Aorta (tissue), 5 donors: ENCODE measurements at regions of chr1 and their contacts with region 1.

Region 1: DNA sequence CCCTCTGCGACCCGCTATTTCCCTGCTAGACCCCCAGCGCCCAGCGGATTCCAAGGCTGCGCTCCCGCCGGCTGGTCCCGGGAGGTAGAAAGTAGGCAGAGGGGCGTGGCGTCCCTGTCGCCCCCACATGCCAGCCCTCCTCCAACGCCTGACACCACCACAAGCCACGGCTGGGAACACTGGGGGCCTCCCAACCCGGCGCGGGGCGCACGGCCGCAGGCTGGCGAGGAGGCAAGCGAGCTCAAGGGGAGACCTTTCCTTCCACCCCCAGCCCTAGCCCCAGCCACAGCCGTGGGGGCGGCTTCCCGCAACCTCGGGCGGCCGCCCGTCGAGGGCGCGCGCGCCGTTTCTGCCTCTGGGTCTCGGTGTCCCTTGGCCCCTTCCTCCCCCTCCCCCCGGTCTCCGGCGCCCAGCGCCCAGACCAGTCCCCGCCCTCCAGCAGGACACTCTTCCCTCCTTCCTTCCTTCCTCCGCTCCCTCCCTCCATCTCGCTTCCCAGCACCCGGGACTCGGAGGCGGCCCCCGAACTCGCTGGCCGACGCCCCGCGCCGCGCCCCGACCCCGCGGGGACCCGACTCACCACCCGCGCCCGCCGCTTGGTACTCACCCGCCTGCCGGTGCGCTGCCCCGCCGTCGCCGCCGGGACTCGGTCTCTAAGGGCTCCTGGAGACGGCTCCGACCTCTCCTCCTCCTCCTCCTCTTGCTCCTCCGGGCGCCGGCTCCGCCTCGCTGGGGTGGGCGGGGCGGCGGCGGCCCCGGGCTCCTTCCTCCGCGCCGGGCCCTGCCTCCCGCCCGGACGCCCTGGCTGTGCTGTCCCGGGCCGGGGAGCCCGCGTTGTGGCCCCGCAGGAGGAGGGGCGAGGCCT is at the start of gene GNG12:
- DNase-seq: peak; percentile 87 to 91
- ATAC-seq: peak; percentile 89
- H3K4me3 ChIP-seq: peak within 1 kb of the TSS; percentile 71 to 93
- H3K27ac ChIP-seq: peak within 1 kb of the TSS; percentile 91 to 96
- H3K4me1 ChIP-seq: peaks cover 0 to 3% of the 10 kb centered on the region in 2 donors
- H3K27me3 ChIP-seq: no peaks in the 10 kb centered on the region
- total RNA-seq, gene GNG12: 123 to 175 TPM

Region 2: DNA sequence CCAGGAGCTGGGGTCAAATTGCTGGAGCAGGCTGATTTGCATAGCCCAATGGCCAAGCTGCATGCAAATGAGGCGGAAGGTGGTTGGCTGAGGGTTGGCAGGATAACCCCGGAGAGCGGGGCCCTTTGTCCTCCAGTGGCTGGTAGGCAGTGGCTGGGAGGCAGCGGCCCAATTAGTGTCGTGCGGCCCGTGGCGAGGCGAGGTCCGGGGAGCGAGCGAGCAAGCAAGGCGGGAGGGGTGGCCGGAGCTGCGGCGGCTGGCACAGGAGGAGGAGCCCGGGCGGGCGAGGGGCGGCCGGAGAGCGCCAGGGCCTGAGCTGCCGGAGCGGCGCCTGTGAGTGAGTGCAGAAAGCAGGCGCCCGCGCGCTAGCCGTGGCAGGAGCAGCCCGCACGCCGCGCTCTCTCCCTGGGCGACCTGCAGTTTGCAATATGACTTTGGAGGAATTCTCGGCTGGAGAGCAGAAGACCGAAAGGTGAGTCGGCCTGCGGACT is 147.9 kb before region 1 on chr1 and contains the start of gene GADD45A:
- intact Hi-C with region 1: loop called in 1 of 2 experiments (anchors 5 kb)
- DNase-seq: peak; percentile 99
- ATAC-seq: peak; percentile 95
- H3K4me3 ChIP-seq: peak within 1 kb of the TSS; percentile 80 to 96
- H3K27ac ChIP-seq: peak within 1 kb of the TSS; percentile 87 to 95
- H3K4me1 ChIP-seq: peaks cover 0 to 5% of the 10 kb centered on the region in 2 donors
- H3K27me3 ChIP-seq: no peaks in the 10 kb centered on the region
- total RNA-seq, gene GADD45A: 49.7 to 158 TPM

Region 3: DNA sequence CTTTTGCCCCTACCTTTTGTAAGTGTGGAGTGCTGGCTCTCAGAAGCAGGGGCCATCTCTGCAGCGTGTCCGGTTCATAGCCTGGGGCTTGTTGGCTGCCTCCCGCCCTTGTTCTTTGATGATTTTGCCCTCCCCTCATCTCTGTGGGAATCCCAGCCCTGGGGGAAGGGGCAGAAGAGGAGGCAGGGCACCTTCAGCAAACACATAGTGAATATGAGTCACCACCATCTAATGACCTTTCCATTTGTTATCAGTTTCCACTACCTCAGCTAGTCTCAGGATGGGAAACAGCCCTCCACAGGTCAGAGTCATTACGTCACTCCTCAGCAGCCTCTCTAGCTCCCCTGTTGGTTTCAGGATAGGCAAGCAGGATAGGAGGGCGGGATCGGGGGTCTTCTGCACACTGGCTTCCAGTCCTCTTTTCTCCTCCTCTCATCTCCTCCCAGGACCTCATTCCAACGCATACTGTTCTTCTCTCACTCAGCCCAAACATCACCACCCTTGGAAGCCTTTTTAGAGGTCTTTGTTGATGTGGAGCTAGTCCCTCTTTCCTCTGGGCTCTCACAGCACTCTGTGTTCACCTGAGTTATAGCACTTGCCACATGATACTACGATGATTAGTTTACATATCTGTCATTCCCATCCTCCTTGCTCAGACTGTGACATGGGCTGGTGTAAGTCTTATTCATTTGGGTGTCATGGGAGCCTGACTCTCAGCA is 132.1 kb before region 1 on chr1:
- intact Hi-C with region 1: loop called in 1 of 2 experiments (anchors 10 kb)
- DNase-seq: no peak
- ATAC-seq: peak; percentile 62
- H3K4me3 ChIP-seq: no peak overlapping the region
- H3K27ac ChIP-seq: no peak overlapping the region
- H3K4me1 ChIP-seq: no peaks in the 10 kb centered on the region
- H3K27me3 ChIP-seq: no peaks in the 10 kb centered on the region

Region 4: GRCh38 chr1:67766141-67766978 is 66.6 kb before region 1 on chr1:
- intact Hi-C with region 1: loop called (anchors 5 kb)
- DNase-seq: peak; percentile 63 to 83
- ATAC-seq: peak; percentile 76
- H3K4me3 ChIP-seq: no peak overlapping the region
- H3K27ac ChIP-seq: peak overlapping the region in 1 of 2 donors; percentile 22
- H3K4me1 ChIP-seq: peaks cover 0 to 5% of the 10 kb centered on the region in 2 donors
- H3K27me3 ChIP-seq: no peaks in the 10 kb centered on the region

Region 5: GRCh38 chr1:67780637-67781036 is 52.3 kb before region 1 on chr1:
- intact Hi-C with region 1: no loop called
- DNase-seq: no peak
- ATAC-seq: peak; percentile 62
- H3K4me3 ChIP-seq: no peak overlapping the region
- H3K27ac ChIP-seq: no peak overlapping the region
- H3K4me1 ChIP-seq: peaks cover 7 to 20% of the 10 kb centered on the region in 2 donors
- H3K27me3 ChIP-seq: no peaks in the 10 kb centered on the region

Region 6: DNA sequence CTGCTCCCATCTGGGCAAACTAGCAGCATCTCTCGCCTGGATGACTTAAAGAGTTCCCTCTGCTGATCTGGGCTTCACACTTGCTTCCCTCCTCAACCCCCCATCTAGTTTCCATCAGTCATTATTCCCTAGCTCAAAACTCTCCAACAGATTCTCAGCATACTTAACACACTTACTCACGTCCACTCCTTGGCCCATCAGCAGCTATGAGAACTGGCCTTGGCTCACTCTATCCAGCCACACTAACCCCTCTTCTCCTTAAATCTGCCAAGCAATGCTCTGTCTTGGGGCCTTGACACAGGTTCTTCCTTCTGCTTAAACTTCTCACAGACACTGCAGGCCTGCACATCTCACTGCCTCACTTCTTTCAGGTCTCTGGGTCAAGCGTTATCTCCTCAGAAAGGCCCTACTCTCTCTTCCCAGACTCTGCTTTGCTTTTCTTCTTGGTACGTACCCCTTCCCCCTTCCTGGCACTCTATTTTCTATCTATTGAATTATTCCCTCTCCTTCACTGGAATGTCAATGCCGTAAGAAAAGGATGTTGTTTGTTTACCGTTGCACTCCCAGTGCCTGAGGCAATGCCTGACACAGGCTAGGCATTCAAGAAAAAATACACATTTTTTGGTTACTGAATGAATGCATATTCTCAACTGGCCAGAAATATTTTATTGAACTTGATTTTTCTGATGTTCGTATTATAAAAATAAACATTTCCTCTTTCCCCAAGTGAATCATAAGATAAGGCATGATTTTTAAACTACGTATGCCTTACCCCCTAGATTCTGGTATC is 41.1 kb before region 1 on chr1:
- intact Hi-C with region 1: loop called (anchors 2 to 5 kb)
- DNase-seq: peak in 1 of 2 donors; percentile 69
- ATAC-seq: peak; percentile 84
- H3K4me3 ChIP-seq: no peak overlapping the region
- H3K27ac ChIP-seq: peak overlapping the region; percentile 84 to 99
- H3K4me1 ChIP-seq: peaks cover 12 to 30% of the 10 kb centered on the region in 2 donors
- H3K27me3 ChIP-seq: no peaks in the 10 kb centered on the region

Region 7: DNA sequence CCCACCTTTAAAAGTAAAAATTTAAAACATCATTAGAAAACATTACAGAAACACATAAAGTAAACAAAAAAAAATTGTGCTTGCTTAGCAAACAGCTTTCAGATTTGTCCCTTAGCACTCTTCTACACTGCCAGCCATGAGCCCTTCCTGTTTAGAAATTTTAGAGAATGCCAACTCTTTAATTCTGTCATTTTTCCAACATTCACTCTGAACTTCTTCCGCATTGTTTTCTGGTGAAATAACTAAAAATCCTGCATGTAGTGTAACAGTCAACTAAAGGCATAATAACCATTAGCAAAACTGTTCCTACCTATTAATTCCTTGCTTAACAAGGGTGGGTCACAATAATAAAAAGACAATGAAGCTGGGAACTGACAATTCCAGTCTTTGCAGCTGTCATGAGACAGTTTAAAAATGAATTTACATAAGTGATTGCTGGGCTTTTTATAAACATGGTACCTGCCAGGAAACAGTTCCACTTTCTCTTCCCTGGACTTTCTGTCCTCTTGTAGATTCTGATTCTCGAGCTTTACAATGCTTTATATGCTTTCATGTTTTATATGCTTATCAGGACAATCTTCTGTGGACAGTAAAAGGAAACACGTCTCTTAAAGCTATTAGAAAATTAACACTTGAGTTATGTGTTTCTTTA is 18.7 kb before region 1 on chr1:
- intact Hi-C with region 1: loop called in 1 of 2 experiments (anchors 1 kb)
- DNase-seq: no peak
- ATAC-seq: peak; percentile 53
- H3K4me3 ChIP-seq: no peak overlapping the region
- H3K27ac ChIP-seq: peak overlapping the region; percentile 53 to 61
- H3K4me1 ChIP-seq: peaks cover 11 to 19% of the 10 kb centered on the region in 2 donors
- H3K27me3 ChIP-seq: no peaks in the 10 kb centered on the region

Region 8: GRCh38 chr1:68221621-68222373 is 388.8 kb after region 1 on chr1:
- intact Hi-C with region 1: loop called in 1 of 2 experiments (anchors 10 kb)
- DNase-seq: no peak
- ATAC-seq: no peak
- H3K4me3 ChIP-seq: no peak overlapping the region
- H3K27ac ChIP-seq: no peak overlapping the region
- H3K4me1 ChIP-seq: peaks cover 0 to 6% of the 10 kb centered on the region in 2 donors
- H3K27me3 ChIP-seq: no peaks in the 10 kb centered on the region